ENCODE measurements at regions of chr19 and their contacts with region 1.

Region 1: GRCh38 chr19:40897962-40898361 is 15.9 kb upstream of the CYP2A7 start:
- DNase-seq: no peak
- ATAC-seq: no peak
- H3K4me3 Mint-ChIP-seq: no peak overlapping the region
- H3K27ac Mint-ChIP-seq: no peak overlapping the region
- H3K4me1 Mint-ChIP-seq: peaks cover 9% of the 10 kb centered on the region; the same call in 1 of the 2 replicates
- H3K27me3 Mint-ChIP-seq: peaks cover 12% of the 10 kb centered on the region
- CTCF ChIP-seq: no peak

Region 2: DNA sequence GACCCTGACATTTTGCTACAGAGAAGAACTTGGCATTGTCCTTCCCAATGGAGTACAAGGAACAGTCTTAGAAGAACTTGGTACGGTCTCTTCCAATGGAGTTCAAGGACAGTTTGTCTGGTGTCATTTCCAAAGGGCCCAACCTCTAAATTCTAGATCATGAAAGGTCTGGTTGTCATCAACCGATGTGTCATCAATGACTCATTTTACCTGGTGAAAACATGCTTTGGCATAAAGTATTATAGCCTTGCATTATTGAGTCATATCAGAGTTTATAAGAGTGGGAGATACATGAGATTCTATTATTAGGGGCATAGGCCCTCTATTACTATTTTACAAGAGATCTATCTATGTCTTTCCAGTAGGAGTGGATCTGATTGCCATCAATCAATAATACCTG is 97.4 kb after region 1 on chr19:
- CTCF ChIA-PET with region 1: no interaction called
- POLR2A ChIA-PET with region 1: no interaction called
- DNase-seq: no peak
- ATAC-seq: no peak
- H3K4me3 Mint-ChIP-seq: no peak overlapping the region
- H3K27ac Mint-ChIP-seq: no peak overlapping the region
- H3K4me1 Mint-ChIP-seq: peaks cover 11% of the 10 kb centered on the region
- H3K27me3 Mint-ChIP-seq: no peaks in the 10 kb centered on the region; the same call in 1 of the 2 replicates
- CTCF ChIP-seq: no peak

Region 3: GRCh38 chr19:41133260-41133659 is 235.3 kb after region 1 on chr19:
- CTCF ChIA-PET with region 1: no interaction called
- POLR2A ChIA-PET with region 1: interaction called, 10 read pairs
- DNase-seq: no peak
- ATAC-seq: no peak
- H3K4me3 Mint-ChIP-seq: no peak overlapping the region
- H3K27ac Mint-ChIP-seq: no peak overlapping the region
- H3K4me1 Mint-ChIP-seq: peaks cover 29% of the 10 kb centered on the region
- H3K27me3 Mint-ChIP-seq: peaks cover 46% of the 10 kb centered on the region
- CTCF ChIP-seq: no peak

Measured in WTC11 (cell line).